PC-9 (cell line): ENCODE measurements at regions of chr1 and their contacts with region 1.

Region 1: GRCh38 chr1:166176416-166176815 is 9.6 kb upstream of the FAM78B start:
- DNase-seq: no peak
- H3K4me3 ChIP-seq: no peak overlapping the region
- H3K27ac ChIP-seq: no peak overlapping the region
- H3K4me1 ChIP-seq: no peaks in the 10 kb centered on the region
- H3K27me3 ChIP-seq: no peaks in the 10 kb centered on the region; the same call in 1 of the 2 replicates
- CTCF ChIP-seq: no peak

Region 2: DNA sequence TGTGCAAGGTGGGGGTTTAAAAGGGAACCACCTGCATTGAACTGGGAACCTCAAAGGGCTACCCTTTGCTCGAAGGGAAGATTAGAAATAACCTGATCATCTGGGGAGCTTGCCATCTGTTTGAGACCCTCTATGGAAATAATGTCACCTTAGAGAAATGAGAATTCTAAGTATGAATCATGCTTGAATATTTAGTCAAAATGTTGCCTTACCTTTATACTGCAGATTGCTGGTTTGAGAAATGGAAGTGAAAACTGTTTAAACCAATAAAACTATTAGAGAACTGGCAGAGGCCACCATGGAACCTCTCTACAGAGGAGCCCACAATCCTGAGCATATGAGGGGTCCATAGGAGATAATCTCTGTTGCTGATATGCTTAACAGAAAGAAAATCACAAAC is 121.6 kb after region 1 on chr1:
- CTCF ChIA-PET with region 1: no interaction called
- POLR2A ChIA-PET with region 1: no interaction called
- intact Hi-C with region 1: loop called (anchors 5 kb)
- DNase-seq: no peak
- H3K4me3 ChIP-seq: no peak overlapping the region
- H3K27ac ChIP-seq: no peak overlapping the region
- H3K4me1 ChIP-seq: no peaks in the 10 kb centered on the region
- H3K27me3 ChIP-seq: peaks cover 4% of the 10 kb centered on the region; the same call in 1 of the 2 replicates
- CTCF ChIP-seq: no peak